H1 (cell line): ENCODE measurements at regions of chr6 and their contacts with region 1.

Region 1: DNA sequence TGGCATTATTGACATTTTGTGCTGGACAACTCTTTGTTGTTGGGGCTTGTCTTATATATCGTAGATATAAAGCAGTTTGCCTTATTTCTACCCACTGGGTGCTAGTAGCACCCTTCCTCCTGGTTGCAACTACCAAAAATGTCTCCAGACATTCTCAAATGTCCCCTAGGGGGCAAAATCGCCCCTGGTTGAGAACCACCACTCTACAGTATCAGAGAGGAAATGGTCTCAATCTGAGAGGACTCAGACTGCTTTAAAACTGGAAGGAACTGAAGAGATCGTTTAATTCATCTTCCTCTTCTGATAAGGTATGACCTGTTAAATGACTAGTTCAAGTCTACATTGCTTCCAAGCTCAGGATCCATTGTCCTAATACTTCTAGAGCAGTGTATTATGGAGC is 14.9 kb downstream of the SH3BGRL2 start:
- DNase-seq: peak in 1 of 2 experiments; percentile 47
- H3K4me3 ChIP-seq: no peak overlapping the region
- H3K27ac ChIP-seq: no peak overlapping the region
- H3K4me1 ChIP-seq: peaks cover 0 to 3% (median 2%) of the 10 kb centered on the region in 4 experiments; a peak in 2 of 7 replicates
- H3K27me3 ChIP-seq: no peaks in the 10 kb centered on the region
- CTCF ChIP-seq: peak in 2 of 3 experiments; percentile 56 to 62; a peak in 3 of 4 replicates
- EP300 ChIP-seq: no peak
- POLR2A ChIP-seq: no peak
- RAD21 ChIP-seq: peak; percentile 53 to 72

Region 2: GRCh38 chr6:79544939-79545450 is 101.0 kb before region 1 on chr6:
- CTCF ChIA-PET with region 1: no interaction called
- POLR2A ChIA-PET with region 1: no interaction called
- DNase-seq: peak; percentile 52 to 83
- H3K4me3 ChIP-seq: peak overlapping the region in 1 of 4 experiments; percentile 20; a peak in 1 of 8 replicates
- H3K27ac ChIP-seq: no peak overlapping the region
- H3K4me1 ChIP-seq: peaks cover 4 to 12% (median 5%) of the 10 kb centered on the region in 4 experiments; a peak in 6 of 7 replicates
- H3K27me3 ChIP-seq: no peaks in the 10 kb centered on the region
- CTCF ChIP-seq: peak; percentile 42 to 65 (median 44)
- EP300 ChIP-seq: peak in 1 of 2 experiments; percentile 86; a peak in 2 of 3 replicates
- POLR2A ChIP-seq: no peak
- RAD21 ChIP-seq: peak; percentile 43 to 59

Region 3: DNA sequence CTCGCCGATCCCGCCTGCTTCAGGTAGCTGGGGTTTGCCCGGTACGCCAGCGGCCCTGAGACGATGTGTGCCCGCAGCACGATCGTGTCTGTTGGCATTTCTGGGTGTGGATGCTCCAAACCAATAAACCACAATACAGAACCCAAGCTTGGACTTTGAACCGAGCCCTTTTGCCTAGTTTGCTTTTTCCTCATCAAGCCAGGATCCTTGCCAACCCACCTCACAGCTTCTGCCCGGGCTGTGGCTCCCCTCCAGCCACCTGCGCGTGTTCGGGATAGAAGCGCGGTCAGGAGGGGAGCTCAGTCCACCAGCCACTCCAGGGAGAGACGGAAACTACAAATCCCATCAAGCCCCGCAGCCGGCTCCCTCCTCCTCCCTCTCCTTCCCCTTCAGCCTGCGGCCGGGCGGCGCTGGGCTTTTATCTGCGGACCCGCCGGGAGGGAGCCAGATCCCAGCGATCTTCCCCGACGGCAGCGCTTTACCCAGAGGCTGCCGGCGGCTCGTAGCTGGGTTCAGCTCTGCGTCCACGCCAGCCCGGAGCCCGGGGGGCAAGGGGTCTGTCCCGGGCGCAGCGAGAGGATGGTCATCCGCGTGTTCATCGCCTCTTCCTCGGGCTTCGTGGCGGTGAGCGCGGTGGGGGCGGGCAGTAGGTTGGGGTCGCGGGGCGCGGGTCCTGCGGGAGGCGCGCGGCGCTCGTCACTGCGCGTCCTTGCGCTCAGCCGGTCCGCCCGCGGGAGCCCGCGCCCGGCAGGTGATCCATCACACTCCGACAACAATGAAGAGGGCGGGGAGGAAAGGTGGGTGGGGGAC is 14.9 kb before region 1 on chr6 and contains the start of gene SH3BGRL2:
- CTCF ChIA-PET with region 1: interaction called, 15 read pairs
- POLR2A ChIA-PET with region 1: interaction called, 13 read pairs
- DNase-seq: peak; percentile 33 to 90
- H3K4me3 ChIP-seq: peak within 1 kb of the TSS; percentile 70 to 97 (median 90)
- H3K27ac ChIP-seq: peak within 1 kb of the TSS; percentile 47; the same call in 1 of the 2 replicates
- H3K4me1 ChIP-seq: peaks cover 0 to 3% (median 0%) of the 10 kb centered on the region in 4 experiments; a peak in 2 of 7 replicates
- H3K27me3 ChIP-seq: peaks cover 0 to 2% (median 0%) of the 10 kb centered on the region in 4 experiments; a peak in 1 of 7 replicates
- CTCF ChIP-seq: no peak
- EP300 ChIP-seq: no peak
- POLR2A ChIP-seq: peak in 1 of 2 experiments; percentile 87; a peak in 2 of 3 replicates
- RAD21 ChIP-seq: no peak; a peak in 1 of 4 replicates
- total RNA-seq, gene SH3BGRL2: 20.0 and 20.3 TPM in 2 replicates

Region 4: GRCh38 chr6:79665725-79666551 is 19.9 kb after region 1 on chr6:
- CTCF ChIA-PET with region 1: interaction called, 12 read pairs
- POLR2A ChIA-PET with region 1: no interaction called
- DNase-seq: no peak
- H3K4me3 ChIP-seq: no peak overlapping the region
- H3K27ac ChIP-seq: no peak overlapping the region
- H3K4me1 ChIP-seq: peaks cover 0 to 17% (median 9%) of the 10 kb centered on the region in 4 experiments; a peak in 6 of 7 replicates
- H3K27me3 ChIP-seq: no peaks in the 10 kb centered on the region
- CTCF ChIP-seq: no peak
- EP300 ChIP-seq: no peak
- POLR2A ChIP-seq: no peak
- RAD21 ChIP-seq: no peak

Region 5: GRCh38 chr6:79672631-79673111 is 26.7 kb after region 1 on chr6:
- CTCF ChIA-PET with region 1: interaction called, 25 read pairs
- POLR2A ChIA-PET with region 1: interaction called, 4 read pairs
- DNase-seq: no peak
- H3K4me3 ChIP-seq: no peak overlapping the region
- H3K27ac ChIP-seq: no peak overlapping the region
- H3K4me1 ChIP-seq: peaks cover 0 to 5% (median 4%) of the 10 kb centered on the region in 4 experiments; a peak in 5 of 7 replicates
- H3K27me3 ChIP-seq: no peaks in the 10 kb centered on the region
- CTCF ChIP-seq: peak in 2 of 3 experiments; percentile 37 to 62; a peak in 2 of 4 replicates
- EP300 ChIP-seq: no peak
- POLR2A ChIP-seq: no peak
- RAD21 ChIP-seq: peak; percentile 80 to 83

Region 6: DNA sequence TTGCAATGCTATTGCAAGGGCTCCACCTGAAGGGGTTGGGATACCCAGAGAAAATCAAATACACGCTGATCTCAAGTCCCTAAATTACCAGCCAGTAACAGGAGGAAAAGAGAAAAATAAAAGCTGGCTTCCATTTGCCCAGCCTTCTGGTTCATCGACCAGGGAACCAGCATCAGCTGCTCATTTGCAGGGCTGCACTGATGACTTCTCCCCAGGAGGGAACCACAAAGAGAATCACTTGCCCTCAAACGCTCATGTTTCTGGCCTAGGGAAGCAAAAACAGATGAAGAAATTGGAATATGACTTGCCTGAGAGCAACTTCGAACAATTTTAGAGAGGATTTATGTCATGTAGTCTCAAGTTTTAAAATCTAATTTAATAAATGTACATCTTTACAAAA is 104.8 kb after region 1 on chr6:
- CTCF ChIA-PET with region 1: no interaction called
- POLR2A ChIA-PET with region 1: no interaction called
- DNase-seq: no peak
- H3K4me3 ChIP-seq: no peak overlapping the region
- H3K27ac ChIP-seq: no peak overlapping the region
- H3K4me1 ChIP-seq: no peaks in the 10 kb centered on the region
- H3K27me3 ChIP-seq: no peaks in the 10 kb centered on the region
- CTCF ChIP-seq: no peak
- EP300 ChIP-seq: no peak
- POLR2A ChIP-seq: no peak
- RAD21 ChIP-seq: no peak

Region 7: GRCh38 chr6:79802657-79803300 is 156.8 kb after region 1 on chr6:
- CTCF ChIA-PET with region 1: no interaction called
- POLR2A ChIA-PET with region 1: no interaction called
- DNase-seq: no peak
- H3K4me3 ChIP-seq: no peak overlapping the region
- H3K27ac ChIP-seq: no peak overlapping the region
- H3K4me1 ChIP-seq: no peaks in the 10 kb centered on the region
- H3K27me3 ChIP-seq: no peaks in the 10 kb centered on the region
- CTCF ChIP-seq: no peak
- EP300 ChIP-seq: no peak
- POLR2A ChIP-seq: no peak
- RAD21 ChIP-seq: no peak